Prostate gland (tissue), 2 donors: ENCODE measurements at regions of chr1 and their contacts with region 1.

Region 1: GRCh38 chr1:93629099-93630059 is 52.3 kb downstream of the BCAR3 start:
- DNase-seq: peak; percentile 79
- H3K4me3 ChIP-seq: no peak overlapping the region
- H3K27ac ChIP-seq: peak overlapping the region; percentile 25 to 49
- H3K4me1 ChIP-seq: no peaks in the 10 kb centered on the region
- H3K27me3 ChIP-seq: no peaks in the 10 kb centered on the region
- CTCF ChIP-seq: peak; percentile 54 to 94 (median 81)
- POLR2A ChIP-seq: no peak

Region 2: DNA sequence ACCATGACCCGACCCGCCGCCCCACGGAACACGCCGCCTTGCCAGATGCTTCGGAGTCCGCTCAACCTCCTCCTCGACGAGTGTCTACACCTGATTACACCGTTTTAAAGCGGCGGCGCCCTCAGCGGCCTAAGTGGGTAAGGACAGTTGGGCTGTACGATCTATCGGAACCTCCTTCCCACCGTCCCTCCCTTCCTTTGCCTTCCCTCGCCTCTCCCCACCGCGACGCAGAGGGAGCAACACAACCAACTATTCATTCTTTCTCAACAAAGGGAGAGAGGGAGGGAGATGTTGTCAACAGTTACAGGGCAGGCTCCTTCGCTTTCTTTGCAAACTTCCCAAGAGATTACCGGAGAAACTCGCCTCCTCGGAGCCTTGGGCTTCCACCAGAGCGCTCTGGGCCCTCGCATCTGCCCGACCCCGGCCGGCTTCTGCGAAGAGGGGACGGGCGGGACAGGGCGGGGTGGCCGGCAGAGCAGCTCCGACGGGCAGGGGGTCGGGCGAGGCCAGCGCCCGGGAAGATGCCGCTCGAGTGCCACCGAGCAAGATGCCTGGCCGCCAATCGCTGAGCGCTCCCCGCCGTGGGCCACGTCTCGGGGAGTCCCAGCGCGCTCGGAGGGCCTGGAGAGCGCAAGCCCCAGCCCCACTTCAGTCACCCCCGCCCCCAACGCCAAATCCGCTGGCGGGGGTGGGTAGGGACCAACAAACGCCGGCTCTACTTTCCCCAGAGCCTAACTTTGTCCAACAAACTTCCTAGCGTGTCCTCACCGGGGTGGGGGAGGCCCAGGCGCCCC is 51.6 kb after region 1 on chr1:
- intact Hi-C with region 1: loop called (anchors 2 kb)
- DNase-seq: peak; percentile 90
- H3K4me3 ChIP-seq: peak overlapping the region; percentile 50 to 68
- H3K27ac ChIP-seq: peak overlapping the region; percentile 79 to 90
- H3K4me1 ChIP-seq: no peaks in the 10 kb centered on the region
- H3K27me3 ChIP-seq: no peaks in the 10 kb centered on the region
- CTCF ChIP-seq: peak in 3 of 4 experiments; percentile 21 to 82 (median 76)
- POLR2A ChIP-seq: peak; percentile 78

Region 3: DNA sequence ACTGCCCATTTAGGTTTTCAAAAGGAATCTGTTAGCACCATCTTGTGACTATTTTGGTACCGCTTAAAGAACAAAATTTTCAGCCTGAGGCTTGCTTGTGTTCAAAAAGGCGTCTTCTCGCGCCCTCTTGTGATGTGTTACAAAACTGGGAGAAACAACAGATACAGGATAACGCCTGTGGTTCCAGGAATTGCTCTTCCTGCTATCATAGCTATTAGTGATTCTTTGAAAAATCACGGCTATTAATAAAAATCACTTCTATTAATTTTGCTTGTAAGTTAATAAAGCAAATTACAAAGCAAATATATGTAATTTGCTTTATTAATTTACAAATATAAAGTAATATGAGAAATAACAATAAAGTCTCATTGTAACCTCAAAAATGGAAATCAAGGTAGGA is 706.6 kb after region 1 on chr1:
- intact Hi-C with region 1: no loop called
- DNase-seq: peak; percentile 88
- H3K4me3 ChIP-seq: no peak overlapping the region
- H3K27ac ChIP-seq: no peak overlapping the region
- H3K4me1 ChIP-seq: no peaks in the 10 kb centered on the region
- H3K27me3 ChIP-seq: no peaks in the 10 kb centered on the region
- CTCF ChIP-seq: peak; percentile 68 to 98 (median 92)
- POLR2A ChIP-seq: no peak